ENCODE measurements at regions of chr17 and their contacts with region 1.

Region 1: DNA sequence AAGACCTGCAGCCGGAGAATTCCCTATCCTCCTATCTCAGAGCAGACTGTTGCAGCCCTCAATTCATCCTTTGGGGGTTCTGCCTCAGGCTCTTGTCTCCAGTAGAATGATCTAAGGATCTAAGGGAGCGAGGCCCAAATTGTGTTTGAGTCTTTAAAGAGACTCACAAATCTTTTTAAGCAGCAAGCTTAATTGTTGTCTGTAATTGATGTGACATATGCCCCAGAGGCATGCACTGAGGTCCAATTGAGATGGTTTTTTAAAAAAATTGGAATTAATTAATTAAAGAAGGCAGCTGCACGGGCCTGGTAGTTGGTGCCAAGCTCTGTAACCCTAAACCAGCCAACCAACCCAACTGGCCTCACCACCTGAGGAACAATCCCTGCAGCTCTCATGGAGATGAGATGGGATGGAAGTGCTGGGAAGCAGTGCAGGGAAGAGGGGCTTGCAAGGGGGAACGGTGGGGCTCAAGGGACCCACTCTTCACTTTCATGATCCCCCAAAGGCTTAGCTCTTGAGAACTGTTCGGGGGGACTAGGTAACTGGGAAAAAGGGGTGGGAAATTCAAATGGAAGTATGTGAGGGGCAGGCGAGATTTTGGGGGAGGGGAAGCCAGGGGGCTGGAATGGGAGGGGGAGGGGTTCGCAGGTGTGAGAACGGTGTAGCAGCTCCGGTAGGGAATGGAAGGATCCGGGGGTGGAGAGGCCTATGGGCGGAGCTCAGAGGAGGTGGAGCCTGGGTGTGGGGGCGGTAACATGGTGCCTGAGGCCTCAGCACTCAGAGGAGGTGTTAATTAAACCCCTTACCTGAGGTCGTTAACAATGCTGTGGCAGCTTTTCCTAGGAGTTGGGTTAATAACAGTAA is 9.2 kb upstream of the ZNF652 start:
- DNase-seq: no peak
- CTCF ChIP-seq: no peak

Region 2: DNA sequence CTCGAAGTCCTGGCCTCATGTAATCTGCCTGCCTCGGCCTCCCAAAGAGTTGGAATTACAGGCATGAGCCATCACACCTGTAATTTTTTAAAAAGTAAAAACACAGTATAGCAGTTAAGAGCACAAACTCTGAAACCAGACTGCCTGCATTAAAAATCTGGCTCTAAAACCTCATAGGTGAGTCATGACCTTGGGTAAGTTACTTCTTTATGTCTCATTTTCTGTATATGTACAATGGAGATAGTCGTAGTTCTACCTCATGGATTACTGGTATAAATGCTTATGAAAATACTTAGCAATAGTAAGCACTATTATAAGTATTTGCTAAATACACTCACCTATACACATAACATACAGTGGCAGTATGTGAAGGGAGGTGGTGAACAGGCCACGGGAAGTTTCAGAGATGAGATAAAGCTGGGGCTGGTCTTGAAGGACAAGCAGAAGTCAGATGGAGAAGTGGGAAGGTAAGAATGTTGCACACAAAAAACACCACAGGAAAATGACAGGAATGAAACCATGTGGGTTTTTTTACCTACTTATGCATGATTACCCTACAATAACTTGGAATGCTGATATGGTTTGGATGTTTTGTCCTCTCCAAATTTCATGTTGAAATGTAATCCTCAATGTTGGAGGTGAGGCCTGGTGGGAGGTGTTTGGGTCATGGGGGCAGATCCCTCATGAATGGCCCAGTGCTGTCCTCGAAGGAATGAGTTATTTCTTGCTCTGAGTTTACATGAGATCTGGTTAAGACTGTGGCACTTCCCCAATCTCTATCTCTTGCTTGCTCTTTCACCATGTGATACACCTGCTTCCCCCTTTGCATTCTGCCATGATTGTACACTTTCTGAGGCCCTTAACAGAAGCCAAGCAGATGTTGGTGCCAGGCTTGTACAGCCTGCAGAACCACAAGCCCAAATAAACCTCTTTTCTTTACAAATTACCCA is 43.1 kb before region 1 on chr17:
- CTCF ChIA-PET with region 1: interaction called, 14 read pairs
- POLR2A ChIA-PET with region 1: no interaction called
- DNase-seq: peak; percentile 24
- CTCF ChIP-seq: no peak

Region 3: GRCh38 chr17:49349535-49349934 is 21.7 kb before region 1 on chr17:
- CTCF ChIA-PET with region 1: interaction called, 13 read pairs
- POLR2A ChIA-PET with region 1: interaction called, 7 read pairs
- DNase-seq: no peak
- CTCF ChIP-seq: no peak

Region 4: GRCh38 chr17:49390548-49391324 is 19.5 kb after region 1 on chr17:
- CTCF ChIA-PET with region 1: interaction called, 21 read pairs
- POLR2A ChIA-PET with region 1: no interaction called
- DNase-seq: peak; percentile 60
- CTCF ChIP-seq: no peak

Measured in GM10248 (cell line).